ENCODE measurements at regions of chr15 and their contacts with region 1.

Region 1: DNA sequence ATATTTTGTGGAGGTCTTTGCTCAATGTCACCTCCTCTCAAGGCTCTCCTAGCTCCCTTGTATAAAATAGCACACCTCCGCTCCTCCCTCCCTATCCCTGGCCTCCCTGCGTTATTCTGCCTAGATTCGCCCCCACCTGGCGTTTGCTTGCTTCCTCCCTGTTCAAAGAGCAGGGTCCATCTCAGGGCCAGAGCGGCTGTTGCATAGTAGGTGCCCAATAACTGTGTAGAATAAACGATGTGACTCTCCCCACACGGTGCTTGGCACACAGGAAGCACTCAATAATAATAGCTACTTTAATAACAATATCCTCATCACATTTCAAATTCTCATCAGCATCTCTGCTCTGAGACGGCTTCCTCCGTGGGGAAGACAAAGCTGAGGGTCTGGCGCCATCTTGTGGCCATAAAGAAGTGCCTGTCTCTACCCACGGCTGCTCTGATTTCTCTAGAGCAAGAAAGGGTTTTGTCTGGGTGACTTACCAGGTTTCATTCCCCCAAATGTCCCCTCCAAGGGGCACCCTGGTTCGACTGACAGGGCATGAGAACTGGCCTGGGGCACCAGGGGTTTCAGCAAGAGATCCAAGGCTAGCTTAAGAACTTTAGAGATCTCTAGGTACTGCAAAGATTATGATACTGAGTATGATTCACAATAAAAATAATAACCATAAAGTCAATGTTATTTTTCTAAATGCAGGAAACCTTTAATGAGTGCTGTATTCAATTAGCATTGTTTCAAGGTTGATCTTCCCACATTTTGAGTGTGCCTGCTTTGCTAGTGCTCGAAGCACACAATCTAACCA is 16.1 kb downstream of the CD276 start:
- DNase-seq: peak; percentile 79
- ATAC-seq: peak; percentile 58

Region 2: DNA sequence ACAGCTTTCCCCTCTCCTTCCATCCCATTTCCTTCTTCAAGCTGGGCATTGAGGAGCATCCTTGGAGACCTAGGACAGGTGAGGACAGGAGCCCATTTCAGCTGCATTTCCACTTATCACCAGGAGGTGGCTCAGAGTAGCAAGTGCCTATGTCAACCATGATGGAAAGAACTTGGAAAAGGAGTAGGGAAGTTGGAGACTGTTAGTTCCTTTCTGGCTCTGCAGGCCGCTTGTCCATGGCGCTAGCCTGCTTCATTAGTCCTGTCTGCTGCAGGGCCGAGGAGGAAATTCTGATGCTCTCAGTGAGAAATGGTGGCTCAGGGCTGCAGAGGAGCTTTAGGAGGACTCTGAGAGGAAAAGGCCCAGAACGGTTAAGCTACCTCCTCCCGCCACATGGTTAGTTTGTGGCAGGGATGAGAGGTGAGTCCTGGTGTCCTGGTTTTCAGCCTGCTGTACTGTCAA is 23.1 kb before region 1 on chr15:
- intact Hi-C with region 1: loop called (anchors 1 kb)
- DNase-seq: peak; percentile 65
- ATAC-seq: peak; percentile 89